Heart right ventricle (tissue), 16 donors: ENCODE measurements at regions of chr10 and their contacts with region 1.

Region 1: DNA sequence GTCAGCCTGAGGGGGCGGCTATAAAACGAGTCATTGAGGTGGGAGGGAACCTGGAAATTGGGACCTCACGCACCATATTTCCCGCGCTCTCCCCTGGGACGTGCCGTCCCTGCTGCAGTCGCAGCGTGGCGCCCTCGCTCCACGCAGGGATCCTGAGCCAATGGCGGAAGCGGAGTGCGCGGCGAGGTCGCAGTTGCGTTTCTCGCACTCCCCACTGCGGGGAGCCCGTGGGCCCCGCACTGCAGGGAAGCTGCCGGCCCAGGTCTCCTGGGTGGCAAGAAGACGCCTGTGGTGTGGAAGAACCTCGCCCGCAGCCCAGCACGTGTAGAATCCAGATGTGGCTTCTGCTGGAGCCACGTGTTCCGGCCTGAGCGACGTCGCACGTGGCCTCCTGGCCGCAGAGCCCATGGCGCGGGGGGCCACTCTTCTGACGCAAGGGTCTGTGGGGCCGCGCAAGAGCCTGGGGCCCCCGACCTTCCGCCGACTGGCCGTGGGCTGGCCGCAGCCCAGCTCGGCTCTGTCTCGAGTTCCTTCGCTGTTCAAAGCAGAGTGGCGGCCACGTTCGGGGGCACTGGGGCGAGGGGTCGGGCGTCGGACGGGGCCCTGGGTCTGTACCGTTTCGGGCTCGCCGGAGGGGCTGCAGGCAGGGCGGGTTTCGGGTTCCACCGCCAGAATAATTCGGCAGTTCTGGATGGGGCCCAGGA is 26.4 kb downstream of the HIF1AN start:
- DNase-seq: peak; percentile 17 to 62
- ATAC-seq: peak; percentile 72 to 89 (median 84)
- H3K4me3 ChIP-seq: peak overlapping the region in 5 of 10 donors; percentile 8 to 24 (median 14)
- H3K27ac ChIP-seq: no peak overlapping the region
- H3K4me1 ChIP-seq: peaks cover 0 to 15% (median 12%) of the 10 kb centered on the region in 9 donors
- H3K27me3 ChIP-seq: peaks cover 6 to 60% (median 56%) of the 10 kb centered on the region in 7 donors
- CTCF ChIP-seq: peak; percentile 57 to 88 (median 74)

Region 2: GRCh38 chr10:100730725-100731406 is 168.7 kb after region 1 on chr10:
- intact Hi-C with region 1: loop called in 2 of 10 experiments (anchors 10 kb)
- DNase-seq: no peak
- ATAC-seq: peak in 3 of 8 donors; percentile 17 to 43 (median 22)
- H3K4me3 ChIP-seq: peak overlapping the region in 8 of 10 donors; percentile 10 to 42 (median 34)
- H3K27ac ChIP-seq: no peak overlapping the region
- H3K4me1 ChIP-seq: peaks cover 3 to 35% (median 23%) of the 10 kb centered on the region in 9 donors
- H3K27me3 ChIP-seq: peaks cover 22 to 100% (median 100%) of the 10 kb centered on the region in 7 donors
- CTCF ChIP-seq: no peak

Region 3: GRCh38 chr10:100743626-100744135 is 181.5 kb after region 1 on chr10:
- intact Hi-C with region 1: loop called in 5 of 10 experiments (anchors 10 kb)
- DNase-seq: peak in 1 of 2 donors; percentile 24
- ATAC-seq: peak in 6 of 8 donors; percentile 27 to 75 (median 64)
- H3K4me3 ChIP-seq: peak overlapping the region in 1 of 10 donors; percentile 44
- H3K27ac ChIP-seq: no peak overlapping the region
- H3K4me1 ChIP-seq: peaks cover 18 to 66% (median 52%) of the 10 kb centered on the region in 9 donors
- H3K27me3 ChIP-seq: peaks cover 81 to 100% (median 100%) of the 10 kb centered on the region in 7 donors
- CTCF ChIP-seq: peak in 8 of 9 donors; percentile 34 to 69 (median 56)

Region 4: DNA sequence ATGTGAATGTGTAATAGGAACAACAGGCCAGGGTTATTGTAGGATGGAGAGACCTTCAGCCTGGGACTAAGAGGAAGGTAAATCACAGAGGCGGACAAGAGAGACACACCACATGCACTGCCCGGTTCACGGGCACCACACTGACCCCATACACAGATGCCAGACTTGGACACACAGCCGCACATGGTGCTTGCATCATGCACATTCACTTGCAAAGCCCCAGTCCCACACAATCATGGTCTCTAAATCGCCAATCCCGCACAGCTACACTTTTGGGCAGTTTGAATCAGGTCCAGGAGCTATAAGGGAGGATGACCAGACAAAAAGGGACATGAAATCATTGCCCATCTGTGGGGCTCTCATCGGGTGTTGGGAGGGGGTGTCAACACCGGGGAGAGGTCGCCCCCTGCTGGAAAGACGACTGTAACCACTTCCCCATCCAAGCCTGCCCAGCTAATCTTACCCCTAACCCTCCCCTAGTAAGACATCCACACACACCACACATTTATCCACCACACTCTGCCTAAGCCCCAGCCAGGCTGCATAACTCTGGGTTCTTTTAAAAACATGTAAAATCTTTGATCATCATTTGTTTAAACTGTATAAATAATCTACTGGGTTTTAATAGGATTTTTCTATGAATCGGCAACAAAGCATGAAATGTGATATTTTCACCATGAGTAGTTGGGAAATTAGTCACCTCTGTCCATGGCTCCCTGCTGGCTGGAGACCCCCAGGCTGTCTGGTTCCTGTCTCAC is 310.1 kb after region 1 on chr10:
- intact Hi-C with region 1: loop called in 8 of 10 experiments (anchors 5 to 10 kb)
- DNase-seq: no peak
- ATAC-seq: no peak
- H3K4me3 ChIP-seq: no peak overlapping the region
- H3K27ac ChIP-seq: no peak overlapping the region
- H3K4me1 ChIP-seq: no peaks in the 10 kb centered on the region
- H3K27me3 ChIP-seq: peaks cover 0 to 76% (median 61%) of the 10 kb centered on the region in 7 donors
- CTCF ChIP-seq: peak in 7 of 9 donors; percentile 8 to 61 (median 44)

Region 5: GRCh38 chr10:100888796-100889356 is 326.7 kb after region 1 on chr10:
- intact Hi-C with region 1: loop called in 2 of 10 experiments (anchors 5 to 10 kb)
- DNase-seq: no peak
- ATAC-seq: no peak
- H3K4me3 ChIP-seq: no peak overlapping the region
- H3K27ac ChIP-seq: peak overlapping the region in 1 of 10 donors; percentile 48
- H3K4me1 ChIP-seq: peaks cover 0 to 7% (median 0%) of the 10 kb centered on the region in 9 donors
- H3K27me3 ChIP-seq: peaks cover 0 to 54% (median 36%) of the 10 kb centered on the region in 7 donors
- CTCF ChIP-seq: peak in 4 of 9 donors; percentile 17 to 27 (median 21)